CD4-positive, alpha-beta memory T cell (primary cell): ENCODE measurements at regions of chr19 and their contacts with region 1.

Region 1: DNA sequence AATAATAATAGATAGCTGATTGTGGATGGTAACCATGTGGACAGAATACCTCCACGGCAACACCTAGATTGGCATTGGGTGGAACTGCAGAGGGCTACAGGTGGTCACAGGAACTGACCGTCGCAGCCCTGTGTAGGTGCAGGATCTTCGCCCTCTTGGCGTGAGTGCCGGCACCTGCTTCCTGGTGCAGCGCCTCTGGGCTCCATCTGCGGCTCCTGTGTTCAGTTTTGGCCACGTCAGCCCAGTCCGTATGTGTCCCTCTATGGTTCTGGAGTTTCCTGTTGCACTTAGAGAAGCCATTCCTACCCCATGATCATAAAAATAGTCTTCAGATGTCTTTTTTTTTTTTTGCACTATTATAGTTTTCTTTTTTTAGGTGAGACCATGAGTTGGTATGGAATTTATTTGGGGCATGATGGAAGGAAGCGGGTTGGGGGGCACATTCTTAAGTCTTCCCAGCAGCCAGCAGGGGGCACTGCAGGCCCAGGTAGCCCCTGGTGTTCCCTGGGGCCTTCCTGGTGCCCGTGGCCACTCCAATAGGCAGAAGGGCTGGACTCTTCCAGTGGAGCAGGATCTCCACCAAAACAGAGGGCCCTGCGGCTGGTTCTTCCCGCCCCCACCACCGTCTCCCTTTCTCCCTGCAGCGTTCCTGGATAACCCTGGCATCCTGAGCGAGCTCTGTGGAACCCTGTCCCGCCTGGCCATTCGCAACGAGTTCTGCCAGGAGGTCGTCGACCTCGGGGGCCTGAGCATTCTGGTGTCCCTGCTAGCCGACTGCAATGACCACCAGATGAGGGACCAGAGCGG is 10.1 kb upstream of the SLC25A42 start:
- DNase-seq: peak; percentile 54 to 65 (median 57)
- H3K4me3 ChIP-seq: no peak overlapping the region
- H3K4me3 Mint-ChIP-seq: no peak overlapping the region
- H3K27ac ChIP-seq: no peak overlapping the region
- H3K27ac Mint-ChIP-seq: no peak overlapping the region
- H3K4me1 ChIP-seq: no peaks in the 10 kb centered on the region
- H3K4me1 Mint-ChIP-seq: no peaks in the 10 kb centered on the region
- H3K27me3 ChIP-seq: no peaks in the 10 kb centered on the region
- H3K27me3 Mint-ChIP-seq: no peaks in the 10 kb centered on the region

Region 2: DNA sequence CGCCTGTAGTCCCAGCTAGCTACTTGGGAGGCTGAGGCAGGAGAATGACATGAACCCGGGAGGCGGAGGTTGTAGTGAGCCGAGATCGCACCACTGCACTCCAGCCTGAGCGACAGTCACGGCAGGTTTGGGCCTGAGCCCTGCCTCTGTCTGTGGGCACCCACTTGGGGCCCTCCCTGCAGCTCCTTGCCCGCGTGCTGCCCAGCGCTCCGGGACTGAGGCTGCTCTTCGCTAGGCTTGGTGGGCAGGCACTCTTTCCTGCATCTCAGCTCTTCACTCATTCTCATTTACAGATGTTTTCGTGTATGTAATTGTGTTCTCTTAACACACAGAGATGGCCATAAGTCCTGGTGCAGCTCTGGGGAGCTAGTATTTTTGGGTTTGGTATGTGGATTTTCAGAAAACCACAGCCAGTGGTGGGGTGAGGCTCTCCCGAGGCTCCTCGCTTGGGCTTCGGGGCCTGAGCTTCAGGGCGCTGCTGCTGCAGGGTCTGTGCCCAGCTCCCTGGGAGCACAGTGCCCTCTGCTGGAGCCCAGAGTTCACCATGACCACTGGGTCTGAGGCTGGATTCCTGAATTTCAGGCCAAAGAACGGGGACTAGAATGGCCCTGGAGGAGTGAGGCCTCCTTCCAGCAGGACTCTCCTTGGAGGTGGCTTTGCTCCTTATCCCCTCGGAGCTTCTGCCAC is 206.7 kb before region 1 on chr19:
- CTCF ChIA-PET with region 1: no interaction called
- POLR2A ChIA-PET with region 1: no interaction called
- intact Hi-C with region 1: no loop called
- DNase-seq: peak; percentile 58 to 64 (median 62)
- H3K4me3 ChIP-seq: no peak overlapping the region
- H3K4me3 Mint-ChIP-seq: peak overlapping the region in 5 of 8 donors; percentile 17 to 70 (median 39)
- H3K27ac ChIP-seq: no peak overlapping the region
- H3K27ac Mint-ChIP-seq: peak overlapping the region; percentile 42 to 89 (median 63)
- H3K4me1 ChIP-seq: peaks cover 66% of the 10 kb centered on the region
- H3K4me1 Mint-ChIP-seq: peaks cover 47 to 80% (median 63%) of the 10 kb centered on the region in 4 donors
- H3K27me3 ChIP-seq: no peaks in the 10 kb centered on the region
- H3K27me3 Mint-ChIP-seq: no peaks in the 10 kb centered on the region

Region 3: GRCh38 chr19:18857223-18857622 is 196.5 kb before region 1 on chr19:
- CTCF ChIA-PET with region 1: no interaction called
- POLR2A ChIA-PET with region 1: no interaction called
- intact Hi-C with region 1: no loop called
- DNase-seq: peak in 1 of 5 donors; percentile 2
- H3K4me3 ChIP-seq: no peak overlapping the region
- H3K4me3 Mint-ChIP-seq: no peak overlapping the region
- H3K27ac ChIP-seq: no peak overlapping the region
- H3K27ac Mint-ChIP-seq: no peak overlapping the region
- H3K4me1 ChIP-seq: no peaks in the 10 kb centered on the region
- H3K4me1 Mint-ChIP-seq: no peaks in the 10 kb centered on the region
- H3K27me3 ChIP-seq: no peaks in the 10 kb centered on the region
- H3K27me3 Mint-ChIP-seq: no peaks in the 10 kb centered on the region

Region 4: DNA sequence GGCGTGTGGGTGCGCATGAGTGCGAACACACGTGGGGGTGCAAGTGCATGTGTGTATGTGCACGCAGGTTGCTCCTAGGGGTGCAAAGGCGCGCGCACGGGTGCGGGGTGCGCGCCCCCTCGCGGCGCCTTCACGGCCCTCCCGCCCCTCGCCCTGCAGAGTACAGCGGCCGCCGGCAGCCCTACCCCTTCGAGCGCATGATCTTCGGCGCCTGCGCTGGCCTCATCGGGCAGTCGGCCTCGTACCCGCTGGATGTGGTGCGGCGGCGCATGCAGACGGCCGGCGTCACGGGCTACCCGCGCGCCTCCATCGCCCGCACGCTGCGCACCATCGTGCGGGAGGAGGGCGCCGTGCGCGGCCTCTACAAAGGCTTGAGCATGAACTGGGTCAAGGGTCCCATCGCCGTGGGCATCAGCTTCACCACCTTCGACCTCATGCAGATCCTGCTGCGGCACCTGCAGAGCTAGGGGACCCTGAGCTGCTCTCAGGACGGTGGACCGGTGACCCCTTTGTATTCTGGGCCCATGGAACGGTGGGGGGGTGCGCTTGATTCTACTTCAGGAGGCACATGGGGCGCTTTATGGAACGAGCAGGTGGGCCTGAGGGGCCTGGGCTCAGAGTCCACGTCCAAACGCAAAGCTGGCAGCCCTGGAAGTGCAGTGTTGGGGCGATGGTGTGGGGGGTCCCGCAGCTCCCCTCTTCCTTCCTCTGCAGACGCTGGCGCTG is 56.9 kb after region 1 on chr19:
- CTCF ChIA-PET with region 1: interaction called, 34 read pairs
- POLR2A ChIA-PET with region 1: no interaction called
- intact Hi-C with region 1: loop called (anchors 1 kb)
- DNase-seq: peak in 2 of 5 donors; percentile 2 to 13
- H3K4me3 ChIP-seq: no peak overlapping the region
- H3K4me3 Mint-ChIP-seq: no peak overlapping the region
- H3K27ac ChIP-seq: no peak overlapping the region
- H3K27ac Mint-ChIP-seq: no peak overlapping the region
- H3K4me1 ChIP-seq: no peaks in the 10 kb centered on the region
- H3K4me1 Mint-ChIP-seq: peaks cover 5 to 9% (median 5%) of the 10 kb centered on the region in 4 donors
- H3K27me3 ChIP-seq: no peaks in the 10 kb centered on the region
- H3K27me3 Mint-ChIP-seq: no peaks in the 10 kb centered on the region

Region 5: GRCh38 chr19:19115954-19116353 is 62.2 kb after region 1 on chr19:
- CTCF ChIA-PET with region 1: interaction called, 34 read pairs
- POLR2A ChIA-PET with region 1: no interaction called
- intact Hi-C with region 1: no loop called
- DNase-seq: peak in 4 of 5 donors; percentile 24 to 38 (median 31)
- H3K4me3 ChIP-seq: no peak overlapping the region
- H3K4me3 Mint-ChIP-seq: no peak overlapping the region
- H3K27ac ChIP-seq: no peak overlapping the region
- H3K27ac Mint-ChIP-seq: no peak overlapping the region
- H3K4me1 ChIP-seq: no peaks in the 10 kb centered on the region
- H3K4me1 Mint-ChIP-seq: peaks cover 0 to 3% (median 3%) of the 10 kb centered on the region in 4 donors
- H3K27me3 ChIP-seq: no peaks in the 10 kb centered on the region
- H3K27me3 Mint-ChIP-seq: no peaks in the 10 kb centered on the region

Region 6: DNA sequence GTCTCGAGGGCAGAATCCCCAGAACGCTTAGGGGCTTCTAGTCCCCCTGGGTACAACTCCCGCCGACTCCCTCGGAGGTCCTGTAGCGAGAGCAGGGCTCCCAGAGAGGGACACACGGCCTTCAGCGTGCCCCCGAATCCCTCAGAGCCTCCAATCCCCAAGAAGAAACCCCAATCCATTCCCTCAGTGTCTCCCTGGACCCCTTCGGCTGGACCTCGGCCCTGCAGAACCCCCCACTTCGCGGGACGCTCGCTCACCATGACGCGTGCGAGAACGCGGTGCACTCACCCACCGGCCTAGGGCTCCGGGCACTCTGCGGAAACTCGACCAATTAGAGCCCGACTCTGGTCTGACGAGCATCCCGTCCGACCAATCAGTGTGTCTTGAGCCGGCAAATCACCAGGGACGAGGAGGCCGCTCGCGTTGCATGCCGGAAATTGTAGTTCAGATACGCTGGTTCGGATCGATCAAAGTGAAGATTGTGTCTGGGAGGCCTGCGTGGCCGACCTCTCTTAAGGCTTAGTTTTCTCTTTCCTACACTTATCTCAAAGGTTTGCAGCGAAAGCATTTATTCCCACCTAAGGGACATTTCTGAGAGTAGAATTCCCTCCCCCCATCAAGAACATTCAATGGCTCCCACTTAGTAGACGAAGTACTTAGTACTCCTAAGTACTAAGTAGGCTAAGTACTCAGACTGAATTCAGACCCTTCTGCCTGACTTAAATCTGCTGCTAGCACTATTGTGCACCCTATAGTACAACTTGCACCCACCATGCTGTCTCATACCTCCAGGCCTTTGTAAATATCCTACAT is 84.7 kb after region 1 on chr19 and contains the start of gene TMEM161A:
- CTCF ChIA-PET with region 1: interaction called, 60 read pairs
- POLR2A ChIA-PET with region 1: no interaction called
- intact Hi-C with region 1: loop called (anchors 1 kb)
- DNase-seq: peak; percentile 93 to 97 (median 94)
- H3K4me3 ChIP-seq: peak within 1 kb of the TSS; percentile 80 to 85
- H3K4me3 Mint-ChIP-seq: peak within 1 kb of the TSS; percentile 91 to 99 (median 98)
- H3K27ac ChIP-seq: peak within 1 kb of the TSS; percentile 71
- H3K27ac Mint-ChIP-seq: peak within 1 kb of the TSS; percentile 76 to 99 (median 96)
- H3K4me1 ChIP-seq: peaks cover 28% of the 10 kb centered on the region
- H3K4me1 Mint-ChIP-seq: peaks cover 10 to 32% (median 21%) of the 10 kb centered on the region in 4 donors
- H3K27me3 ChIP-seq: no peaks in the 10 kb centered on the region
- H3K27me3 Mint-ChIP-seq: no peaks in the 10 kb centered on the region
- total RNA-seq, gene TMEM161A: 22.5 to 25.1 TPM

Region 7: GRCh38 chr19:19170053-19170872 is 116.6 kb after region 1 on chr19 and contains the start of gene MEF2B:
- CTCF ChIA-PET with region 1: interaction called, 11 read pairs
- POLR2A ChIA-PET with region 1: no interaction called
- intact Hi-C with region 1: no loop called
- DNase-seq: peak; percentile 68 to 85 (median 73)
- H3K4me3 ChIP-seq: peak within 1 kb of the TSS in 1 of 2 donors; percentile 5
- H3K4me3 Mint-ChIP-seq: peak within 1 kb of the TSS in 7 of 8 donors; percentile 60 to 82 (median 71)
- H3K27ac ChIP-seq: no peak within 1 kb of the TSS
- H3K27ac Mint-ChIP-seq: peak within 1 kb of the TSS in 6 of 7 donors; percentile 25 to 79 (median 60)
- H3K4me1 ChIP-seq: peaks cover 14% of the 10 kb centered on the region
- H3K4me1 Mint-ChIP-seq: peaks cover 12 to 17% (median 14%) of the 10 kb centered on the region in 4 donors
- H3K27me3 ChIP-seq: no peaks in the 10 kb centered on the region
- H3K27me3 Mint-ChIP-seq: peaks cover 1% of the 10 kb centered on the region in 2 donors
- total RNA-seq, gene MEF2B: 3.1 to 5.2 TPM